ENCODE measurements at regions of chr13 and their contacts with region 1.

Region 1: GRCh38 chr13:61891401-61891800 is 475.8 kb upstream of the PCDH20 start:
- DNase-seq: no peak
- H3K4me3 ChIP-seq: no peak overlapping the region
- H3K27ac ChIP-seq: no peak overlapping the region
- H3K4me1 ChIP-seq: no peaks in the 10 kb centered on the region
- H3K27me3 ChIP-seq: no peaks in the 10 kb centered on the region
- CTCF ChIP-seq: no peak
- POLR2A ChIP-seq: no peak

Region 2: GRCh38 chr13:61852116-61852619 is 39.2 kb before region 1 on chr13:
- intact Hi-C with region 1: loop called (anchors 2 kb)
- DNase-seq: no peak
- H3K4me3 ChIP-seq: no peak overlapping the region
- H3K27ac ChIP-seq: no peak overlapping the region
- H3K4me1 ChIP-seq: no peaks in the 10 kb centered on the region
- H3K27me3 ChIP-seq: no peaks in the 10 kb centered on the region
- CTCF ChIP-seq: no peak
- POLR2A ChIP-seq: no peak